B cell (primary cell): ENCODE measurements at regions of chr1 and their contacts with region 1.

Region 1: DNA sequence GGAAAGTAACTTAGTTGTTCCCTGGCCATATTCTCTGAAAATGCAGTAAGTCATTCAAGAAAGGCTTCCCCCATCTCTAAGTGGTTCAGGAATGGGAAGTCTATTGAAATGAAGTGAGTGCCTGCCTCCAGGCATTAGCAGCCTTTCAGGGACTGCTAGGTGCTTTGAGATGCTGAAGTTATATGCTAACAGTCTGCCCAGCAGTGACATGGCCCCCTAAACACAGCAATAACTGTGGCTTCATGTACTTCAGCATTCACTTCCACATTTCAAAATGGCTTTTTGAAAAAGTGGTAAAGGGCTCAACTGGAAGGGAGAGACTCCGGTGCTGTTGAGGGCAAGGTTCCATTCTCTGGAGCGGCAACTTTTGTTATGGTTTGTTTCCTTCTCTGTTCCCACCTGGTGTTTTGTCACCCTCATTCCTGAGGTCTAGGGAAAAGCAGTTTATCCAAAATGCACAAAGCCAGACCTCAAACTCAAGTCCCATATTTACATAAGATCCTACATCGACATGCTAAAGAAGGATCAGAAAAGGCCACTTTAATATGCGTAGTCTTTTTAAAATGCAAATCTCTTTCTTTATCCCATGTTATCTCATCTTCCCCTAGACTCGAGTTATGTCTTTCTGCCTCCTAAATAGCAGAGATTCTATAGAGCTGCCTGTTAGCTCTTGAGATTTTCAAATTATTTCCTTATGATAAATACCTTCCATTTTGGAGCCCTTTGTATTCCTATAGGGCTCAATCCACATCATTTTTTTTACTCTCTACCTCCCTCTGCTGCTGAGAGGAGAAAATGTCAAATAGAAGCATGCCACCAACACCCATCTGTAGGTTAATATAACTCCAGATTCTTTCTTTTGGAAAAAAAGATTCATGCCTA is 34.2 kb upstream of the LRRC8C start:
- DNase-seq: peak; percentile 62
- ATAC-seq: peak; percentile 70
- H3K4me3 ChIP-seq: no peak overlapping the region
- H3K4me3 Mint-ChIP-seq: no peak overlapping the region
- H3K27ac ChIP-seq: no peak overlapping the region
- H3K27ac Mint-ChIP-seq: peak overlapping the region; percentile 16
- H3K4me1 ChIP-seq: no peaks in the 10 kb centered on the region
- H3K4me1 Mint-ChIP-seq: peaks cover 4% of the 10 kb centered on the region
- H3K27me3 ChIP-seq: no peaks in the 10 kb centered on the region
- H3K27me3 Mint-ChIP-seq: no peaks in the 10 kb centered on the region
- CTCF ChIP-seq: peak; percentile 86

Region 2: GRCh38 chr1:89310505-89310904 is 288.2 kb before region 1 on chr1:
- CTCF ChIA-PET with region 1: no interaction called
- POLR2A ChIA-PET with region 1: no interaction called
- intact Hi-C with region 1: no loop called
- DNase-seq: peak; percentile 18
- ATAC-seq: no peak
- H3K4me3 ChIP-seq: peak overlapping the region in 1 of 5 experiments; percentile 8
- H3K4me3 Mint-ChIP-seq: peak overlapping the region; percentile 42
- H3K27ac ChIP-seq: no peak overlapping the region
- H3K27ac Mint-ChIP-seq: peak overlapping the region; percentile 11
- H3K4me1 ChIP-seq: peaks cover 21% of the 10 kb centered on the region in 2 donors
- H3K4me1 Mint-ChIP-seq: peaks cover 24% of the 10 kb centered on the region
- H3K27me3 ChIP-seq: no peaks in the 10 kb centered on the region
- H3K27me3 Mint-ChIP-seq: no peaks in the 10 kb centered on the region
- CTCF ChIP-seq: no peak

Region 3: DNA sequence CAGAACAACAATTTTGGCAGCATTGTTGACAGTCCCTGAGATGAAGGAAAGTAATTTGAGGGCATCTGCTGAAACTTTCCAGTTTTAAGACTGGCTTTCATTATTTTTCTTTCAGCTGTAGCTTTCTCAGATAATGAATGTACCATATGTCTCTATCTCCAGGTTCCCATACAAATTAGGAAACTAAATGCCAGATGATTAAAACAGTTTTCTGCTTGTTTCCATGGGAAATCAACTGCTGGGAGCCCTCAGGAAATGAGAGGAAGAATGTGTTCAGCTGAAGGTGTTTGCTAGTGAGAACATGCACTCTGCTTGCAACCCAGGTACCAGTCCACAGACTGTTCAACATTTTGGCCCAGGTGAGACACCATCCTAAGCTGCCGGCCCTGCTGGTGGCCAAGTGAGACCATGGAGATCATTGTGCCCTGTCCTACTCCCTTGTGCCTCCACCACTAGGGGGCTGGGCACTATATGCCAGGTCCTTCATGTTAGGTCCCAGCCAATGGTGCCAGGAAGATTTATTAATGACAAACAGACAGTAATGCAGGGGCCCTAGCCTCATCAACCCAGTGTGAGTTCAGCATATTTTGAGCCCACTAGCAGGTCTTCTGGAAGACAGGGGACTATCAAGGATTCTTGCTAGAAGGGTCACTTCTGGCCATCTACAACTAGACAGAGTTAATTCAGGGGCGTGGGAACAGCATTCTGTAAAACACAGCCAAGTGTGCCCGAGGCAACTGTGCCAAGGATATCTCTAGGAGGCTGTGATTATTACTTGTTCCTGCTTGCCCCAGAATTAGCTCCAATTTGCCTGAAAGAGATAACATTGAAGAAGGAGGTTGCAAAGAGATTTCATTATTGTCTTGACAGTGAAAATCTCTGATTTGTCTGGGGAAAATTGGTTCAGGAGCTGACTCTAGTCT is 17.2 kb after region 1 on chr1:
- CTCF ChIA-PET with region 1: interaction called, 10 read pairs
- POLR2A ChIA-PET with region 1: interaction called, 3 read pairs
- intact Hi-C with region 1: no loop called
- DNase-seq: peak; percentile 52
- ATAC-seq: peak; percentile 77
- H3K4me3 ChIP-seq: no peak overlapping the region
- H3K4me3 Mint-ChIP-seq: no peak overlapping the region
- H3K27ac ChIP-seq: no peak overlapping the region
- H3K27ac Mint-ChIP-seq: no peak overlapping the region
- H3K4me1 ChIP-seq: peaks cover 10 to 11% of the 10 kb centered on the region in 2 donors
- H3K4me1 Mint-ChIP-seq: peaks cover 9% of the 10 kb centered on the region
- H3K27me3 ChIP-seq: no peaks in the 10 kb centered on the region
- H3K27me3 Mint-ChIP-seq: no peaks in the 10 kb centered on the region
- CTCF ChIP-seq: peak; percentile 51